ENCODE measurements at regions of chr6 and their contacts with region 1.

Region 1: GRCh38 chr6:95431637-95432228 is 145.6 kb upstream of the MANEA start:
- DNase-seq: no peak
- H3K4me3 Mint-ChIP-seq: no peak overlapping the region
- H3K27ac Mint-ChIP-seq: no peak overlapping the region
- H3K4me1 Mint-ChIP-seq: no peaks in the 10 kb centered on the region
- H3K27me3 Mint-ChIP-seq: no peaks in the 10 kb centered on the region

Region 2: DNA sequence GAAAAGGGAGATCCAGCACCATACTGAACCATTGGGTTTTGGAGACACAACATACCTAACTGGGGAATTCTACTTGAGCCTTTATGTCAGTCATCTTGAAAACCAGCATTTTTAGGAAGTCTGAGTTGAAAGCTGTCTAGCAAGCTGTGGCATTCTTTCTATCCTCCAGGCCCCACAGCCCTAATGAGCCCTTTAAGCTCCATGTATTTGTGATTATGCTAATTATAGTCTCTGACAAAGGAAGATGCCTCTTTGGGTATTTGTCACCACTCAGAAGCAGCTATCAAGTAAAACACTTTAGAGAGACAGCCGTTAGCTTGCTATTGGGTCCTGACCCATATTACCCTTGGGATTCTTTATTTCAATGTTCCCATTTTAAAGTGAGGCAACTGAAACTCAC is 13.9 kb before region 1 on chr6:
- intact Hi-C with region 1: no loop called
- DNase-seq: no peak
- H3K4me3 Mint-ChIP-seq: no peak overlapping the region
- H3K27ac Mint-ChIP-seq: no peak overlapping the region
- H3K4me1 Mint-ChIP-seq: no peaks in the 10 kb centered on the region
- H3K27me3 Mint-ChIP-seq: no peaks in the 10 kb centered on the region

Region 3: GRCh38 chr6:95866732-95867131 is 435.0 kb after region 1 on chr6:
- intact Hi-C with region 1: loop called (anchors 5 kb)
- DNase-seq: no peak
- H3K4me3 Mint-ChIP-seq: no peak overlapping the region
- H3K27ac Mint-ChIP-seq: no peak overlapping the region
- H3K4me1 Mint-ChIP-seq: no peaks in the 10 kb centered on the region
- H3K27me3 Mint-ChIP-seq: no peaks in the 10 kb centered on the region

Region 4: GRCh38 chr6:95923518-95923917 is 491.8 kb after region 1 on chr6:
- intact Hi-C with region 1: loop called (anchors 1 kb)
- DNase-seq: no peak
- H3K4me3 Mint-ChIP-seq: no peak overlapping the region
- H3K27ac Mint-ChIP-seq: no peak overlapping the region
- H3K4me1 Mint-ChIP-seq: no peaks in the 10 kb centered on the region
- H3K27me3 Mint-ChIP-seq: no peaks in the 10 kb centered on the region

Region 5: GRCh38 chr6:96611342-96611991 is 1179.7 kb after region 1 on chr6:
- intact Hi-C with region 1: loop called (anchors 5 kb)
- DNase-seq: no peak
- H3K4me3 Mint-ChIP-seq: no peak overlapping the region
- H3K27ac Mint-ChIP-seq: no peak overlapping the region
- H3K4me1 Mint-ChIP-seq: no peaks in the 10 kb centered on the region
- H3K27me3 Mint-ChIP-seq: peaks cover 11% of the 10 kb centered on the region